Adrenal gland (tissue), 19 donors: ENCODE measurements at regions of chr2 and their contacts with region 1.

Region 1: DNA sequence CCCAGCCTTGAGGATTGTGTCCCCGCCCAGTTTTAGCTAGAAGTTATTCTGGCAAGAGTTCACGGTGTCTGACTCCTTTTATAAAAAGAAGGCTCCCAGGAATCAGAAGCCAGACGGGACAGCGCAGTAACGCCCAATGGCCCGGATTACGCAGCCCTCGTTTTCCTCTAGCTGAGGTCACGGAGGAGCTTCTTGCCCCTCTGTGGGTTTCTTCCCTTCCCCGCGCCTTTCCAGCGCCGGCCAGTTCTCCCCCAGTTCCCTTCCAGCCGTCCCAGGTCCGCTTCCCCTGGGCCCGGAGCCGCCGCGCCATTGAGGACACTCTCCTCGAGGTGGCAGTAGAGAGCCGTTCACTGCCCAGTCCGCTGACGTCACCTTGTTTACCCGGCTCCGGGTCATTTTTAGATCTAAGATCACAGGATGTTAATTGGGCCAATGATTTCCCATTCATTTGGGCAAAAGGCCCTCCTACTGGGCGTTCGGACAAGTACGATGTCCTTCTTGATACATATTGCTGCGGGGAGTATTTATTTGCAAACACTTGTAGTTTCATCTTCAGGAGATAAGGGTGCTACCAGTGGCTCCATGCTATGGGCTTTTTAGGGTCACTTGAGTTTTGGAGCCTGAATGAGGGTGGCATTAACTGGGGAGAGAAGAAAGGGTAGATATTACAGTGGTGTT is 81.5 kb upstream of the PPM1B start:
- DNase-seq: peak; percentile 78 to 96 (median 91)
- H3K4me3 ChIP-seq: peak overlapping the region in 1 of 4 donors; percentile 50
- H3K27ac ChIP-seq: peak overlapping the region in 3 of 5 donors; percentile 13 to 72 (median 27)
- H3K4me1 ChIP-seq: peaks cover 0 to 5% of the 10 kb centered on the region in 2 donors
- H3K27me3 ChIP-seq: no peaks in the 10 kb centered on the region
- CTCF ChIP-seq: peak; percentile 91 to 96 (median 94)
- POLR2A ChIP-seq: no peak

Region 2: DNA sequence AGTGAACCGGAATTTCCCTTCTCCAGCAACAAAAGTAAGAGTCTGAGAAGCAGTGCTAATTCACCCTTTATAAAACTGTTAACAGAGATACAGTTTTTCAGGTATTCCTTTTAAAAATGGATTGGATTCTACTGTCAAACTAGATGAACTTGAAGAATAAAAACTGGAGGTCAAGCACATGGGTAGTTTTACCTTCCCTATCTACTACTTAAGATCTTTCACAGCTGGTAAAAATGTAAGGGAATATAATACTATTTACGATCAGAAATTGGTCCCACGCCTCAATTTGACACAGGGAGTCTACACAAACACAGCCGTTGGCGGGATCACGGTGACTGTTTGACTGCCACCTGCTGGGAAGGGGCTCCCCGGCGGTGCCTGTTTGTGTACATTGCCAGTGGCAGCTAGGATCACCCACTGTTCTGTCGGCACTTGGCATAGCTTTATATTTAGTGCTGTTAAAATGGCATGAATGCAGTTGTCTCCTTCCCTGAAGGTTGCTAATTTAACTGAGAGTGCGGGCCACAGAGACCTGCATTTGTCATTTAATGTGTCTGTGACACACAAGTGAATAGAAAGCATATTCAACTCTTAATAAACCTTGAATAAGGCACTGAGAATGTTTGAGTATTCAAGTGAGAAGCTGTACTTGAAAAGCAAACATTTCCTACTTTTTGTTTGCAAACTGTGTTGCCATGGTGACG is 188.9 kb before region 1 on chr2:
- intact Hi-C with region 1: no loop called
- DNase-seq: no peak
- H3K4me3 ChIP-seq: no peak overlapping the region
- H3K27ac ChIP-seq: no peak overlapping the region
- H3K4me1 ChIP-seq: no peaks in the 10 kb centered on the region
- H3K27me3 ChIP-seq: no peaks in the 10 kb centered on the region
- CTCF ChIP-seq: no peak
- POLR2A ChIP-seq: no peak

Region 3: DNA sequence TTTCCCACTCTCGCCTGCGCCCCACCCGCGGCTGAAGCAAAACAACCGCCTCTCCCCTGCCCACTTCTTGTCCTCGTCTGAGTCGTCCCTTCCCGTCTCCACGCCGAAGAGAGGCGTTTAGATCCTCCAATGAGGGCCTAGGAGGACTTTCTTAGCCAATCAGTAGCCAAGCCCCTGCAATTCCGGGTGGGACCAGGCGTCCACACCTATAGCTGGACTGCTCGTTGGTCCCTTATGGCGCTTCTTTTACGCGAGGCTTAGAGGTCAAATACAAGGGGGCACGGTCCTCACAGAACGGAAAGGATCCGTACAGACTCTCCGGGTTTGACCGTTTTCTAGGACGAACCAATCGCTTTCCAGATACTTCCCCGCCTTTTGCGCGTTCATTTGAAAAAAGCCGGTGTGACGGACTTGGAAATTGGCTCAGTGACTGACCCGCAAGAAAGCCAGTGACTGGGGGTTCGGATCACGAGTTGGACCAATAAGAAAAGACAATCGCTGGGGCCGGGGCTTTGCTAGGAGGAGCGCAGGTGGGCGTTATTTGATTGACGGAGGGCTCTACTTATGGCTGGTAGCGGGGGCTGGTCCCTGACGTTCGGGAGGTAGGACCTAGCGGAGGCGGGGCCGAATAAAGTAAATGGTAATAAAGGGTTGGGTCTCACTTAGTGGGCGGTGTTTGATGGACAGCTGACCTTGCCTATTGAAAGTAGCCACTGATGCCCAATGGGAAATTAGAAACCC is 80.9 kb after region 1 on chr2:
- intact Hi-C with region 1: loop called in 1 of 2 experiments (anchors 10 kb)
- DNase-seq: peak; percentile 98 to 100 (median 100)
- H3K4me3 ChIP-seq: peak overlapping the region in 3 of 4 donors; percentile 9 to 75 (median 69)
- H3K27ac ChIP-seq: peak overlapping the region; percentile 92 to 99 (median 98)
- H3K4me1 ChIP-seq: peaks cover 14 to 35% of the 10 kb centered on the region in 2 donors
- H3K27me3 ChIP-seq: no peaks in the 10 kb centered on the region
- CTCF ChIP-seq: peak in 1 of 6 experiments; percentile 3
- POLR2A ChIP-seq: peak; percentile 26 to 27